Common myeloid progenitor, CD34-positive (primary cell): ENCODE measurements at regions of chr9 and their contacts with region 1.

Region 1: GRCh38 chr9:122125158-122125508 is 32.0 kb upstream of the TTLL11 start:
- DNase-seq: peak; percentile 74 to 86 (median 81)
- H3K4me3 ChIP-seq: no peak overlapping the region
- H3K27ac ChIP-seq: no peak overlapping the region
- H3K4me1 ChIP-seq: peaks cover 0 to 28% (median 16%) of the 10 kb centered on the region in 4 experiments
- H3K27me3 ChIP-seq: peaks cover 0 to 19% (median 6%) of the 10 kb centered on the region in 5 experiments

Region 2: GRCh38 chr9:122039234-122039633 is 85.9 kb before region 1 on chr9:
- CTCF ChIA-PET with region 1: no interaction called
- POLR2A ChIA-PET with region 1: no interaction called
- DNase-seq: no peak
- H3K4me3 ChIP-seq: no peak overlapping the region
- H3K27ac ChIP-seq: no peak overlapping the region
- H3K4me1 ChIP-seq: peaks cover 0 to 3% (median 0%) of the 10 kb centered on the region in 4 experiments
- H3K27me3 ChIP-seq: no peaks in the 10 kb centered on the region

Region 3: DNA sequence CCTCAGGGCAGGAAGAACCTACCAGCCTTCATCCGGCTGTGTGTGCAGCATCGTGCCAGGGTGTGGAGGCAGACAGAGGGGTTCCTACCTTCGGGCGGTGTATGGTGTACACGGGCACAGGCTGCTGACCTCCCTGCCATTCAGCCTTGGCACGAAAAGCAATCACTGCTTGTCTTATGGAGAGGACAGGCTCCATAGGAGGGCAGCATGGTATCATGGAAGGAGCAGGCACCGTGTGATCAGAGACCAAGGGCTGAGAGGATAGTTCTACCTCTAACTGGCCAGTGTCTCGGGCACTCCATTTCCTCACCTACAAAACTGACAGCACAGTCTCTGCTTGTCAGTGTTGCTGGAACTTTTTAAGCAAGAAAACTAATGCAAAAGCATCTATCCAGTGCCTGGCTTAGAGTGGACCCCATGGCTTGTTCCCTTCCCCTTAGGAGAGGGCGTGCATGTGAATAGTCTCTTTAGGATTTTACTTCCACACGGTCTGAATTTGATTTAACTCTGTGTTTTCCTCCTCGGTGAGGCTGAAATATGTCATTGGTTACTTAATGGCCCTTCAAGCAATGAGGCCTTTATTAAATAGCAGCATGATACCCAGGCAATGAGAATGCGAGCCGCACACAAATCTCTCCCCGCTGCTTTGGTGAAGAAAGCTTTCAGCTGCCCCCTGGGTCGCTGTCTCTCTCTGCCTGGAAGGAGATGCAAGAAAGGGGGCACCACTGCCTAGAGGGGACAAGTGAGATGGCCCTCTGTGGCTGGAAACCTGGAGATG is 54.2 kb before region 1 on chr9:
- CTCF ChIA-PET with region 1: no interaction called
- POLR2A ChIA-PET with region 1: no interaction called
- DNase-seq: no peak
- H3K4me3 ChIP-seq: no peak overlapping the region
- H3K27ac ChIP-seq: no peak overlapping the region
- H3K4me1 ChIP-seq: no peaks in the 10 kb centered on the region
- H3K27me3 ChIP-seq: no peaks in the 10 kb centered on the region

Region 4: DNA sequence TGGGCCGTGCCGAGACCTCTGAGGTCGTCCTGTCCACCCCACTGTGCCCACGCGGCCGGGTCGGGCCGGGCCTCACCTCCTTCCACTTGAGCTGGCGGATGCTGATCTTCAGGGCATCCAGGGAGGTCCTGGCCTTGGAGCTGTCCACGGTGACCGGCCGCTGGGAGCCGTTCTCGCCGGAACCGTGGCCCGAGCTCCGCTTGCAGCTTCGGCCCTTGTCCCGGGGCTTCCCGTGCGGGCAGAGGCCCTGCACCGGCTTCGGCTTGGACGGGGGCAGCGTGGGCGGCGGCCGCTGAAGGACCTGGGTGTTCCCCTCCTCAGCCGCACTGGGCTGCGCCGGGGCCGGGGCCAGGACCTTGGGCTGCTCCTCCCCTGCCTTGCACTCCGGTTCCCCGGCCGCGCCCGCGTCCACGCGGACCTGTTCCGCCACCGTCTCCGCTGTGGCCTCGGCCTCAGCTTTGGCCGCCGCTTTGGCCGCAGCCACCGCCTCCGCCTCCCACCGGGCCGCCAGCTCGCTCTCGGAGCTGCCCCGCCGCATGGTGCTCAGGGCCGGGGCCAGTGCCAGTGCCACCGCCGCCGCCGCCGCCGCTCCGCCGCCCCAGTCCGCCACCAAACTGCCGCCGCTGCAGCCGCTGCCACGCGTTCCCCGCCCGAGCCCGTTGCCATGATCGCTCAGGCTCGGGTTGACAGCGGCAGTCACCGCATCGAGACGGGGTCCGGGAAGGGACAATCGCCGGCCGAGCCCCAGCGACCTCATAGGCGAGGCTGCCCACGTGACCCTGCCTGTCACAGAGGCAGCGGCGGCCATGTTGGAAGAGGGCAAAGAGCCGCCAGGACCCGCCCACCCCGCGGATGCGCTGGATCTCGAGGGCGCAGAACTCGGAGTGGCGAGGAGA is 32.3 kb before region 1 on chr9 and contains the start of gene TTLL11:
- CTCF ChIA-PET with region 1: interaction called, 225 read pairs
- POLR2A ChIA-PET with region 1: no interaction called
- DNase-seq: peak; percentile 93 to 98 (median 97)
- H3K4me3 ChIP-seq: peak within 1 kb of the TSS; percentile 36 to 84 (median 73)
- H3K27ac ChIP-seq: no peak within 1 kb of the TSS
- H3K4me1 ChIP-seq: peaks cover 3 to 31% (median 22%) of the 10 kb centered on the region in 4 experiments
- H3K27me3 ChIP-seq: peaks cover 0 to 5% (median 0%) of the 10 kb centered on the region in 5 experiments

Region 5: GRCh38 chr9:122099271-122099869 is 25.8 kb before region 1 on chr9:
- CTCF ChIA-PET with region 1: interaction called, 225 read pairs
- POLR2A ChIA-PET with region 1: interaction called, 3 read pairs
- DNase-seq: peak; percentile 71 to 87 (median 81)
- H3K4me3 ChIP-seq: peak overlapping the region in 2 of 7 experiments; percentile 33 to 35
- H3K27ac ChIP-seq: no peak overlapping the region
- H3K4me1 ChIP-seq: peaks cover 0 to 9% (median 4%) of the 10 kb centered on the region in 4 experiments
- H3K27me3 ChIP-seq: peaks cover 0 to 5% (median 0%) of the 10 kb centered on the region in 5 experiments

Region 6: DNA sequence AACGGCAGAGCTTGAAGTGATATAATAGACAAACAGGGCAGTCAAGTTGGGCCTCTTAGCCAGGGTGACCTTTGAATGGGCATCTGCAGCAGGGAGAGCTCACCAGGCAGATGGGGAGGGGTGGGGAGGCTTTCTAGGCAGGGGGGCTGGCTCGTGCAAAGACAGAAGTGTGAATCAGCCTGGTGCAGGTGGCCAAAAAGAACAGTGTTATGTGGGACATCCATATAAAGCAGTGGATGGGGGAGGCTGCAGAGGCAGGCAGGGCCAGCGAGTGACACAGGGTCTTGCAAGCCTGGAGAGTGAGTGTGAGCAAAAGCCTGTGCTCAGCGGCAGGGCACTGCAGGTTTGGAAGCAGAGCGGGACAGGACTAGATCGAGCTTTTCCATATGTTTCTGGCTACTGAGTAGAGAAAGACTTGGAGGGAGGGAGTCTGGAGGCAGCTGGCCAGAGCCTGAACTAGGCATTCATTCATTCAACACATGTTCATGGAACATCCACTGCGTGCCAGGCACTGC is 17.8 kb before region 1 on chr9:
- CTCF ChIA-PET with region 1: interaction called, 75 read pairs
- POLR2A ChIA-PET with region 1: no interaction called
- DNase-seq: no peak
- H3K4me3 ChIP-seq: no peak overlapping the region
- H3K27ac ChIP-seq: no peak overlapping the region
- H3K4me1 ChIP-seq: no peaks in the 10 kb centered on the region
- H3K27me3 ChIP-seq: no peaks in the 10 kb centered on the region

Region 7: DNA sequence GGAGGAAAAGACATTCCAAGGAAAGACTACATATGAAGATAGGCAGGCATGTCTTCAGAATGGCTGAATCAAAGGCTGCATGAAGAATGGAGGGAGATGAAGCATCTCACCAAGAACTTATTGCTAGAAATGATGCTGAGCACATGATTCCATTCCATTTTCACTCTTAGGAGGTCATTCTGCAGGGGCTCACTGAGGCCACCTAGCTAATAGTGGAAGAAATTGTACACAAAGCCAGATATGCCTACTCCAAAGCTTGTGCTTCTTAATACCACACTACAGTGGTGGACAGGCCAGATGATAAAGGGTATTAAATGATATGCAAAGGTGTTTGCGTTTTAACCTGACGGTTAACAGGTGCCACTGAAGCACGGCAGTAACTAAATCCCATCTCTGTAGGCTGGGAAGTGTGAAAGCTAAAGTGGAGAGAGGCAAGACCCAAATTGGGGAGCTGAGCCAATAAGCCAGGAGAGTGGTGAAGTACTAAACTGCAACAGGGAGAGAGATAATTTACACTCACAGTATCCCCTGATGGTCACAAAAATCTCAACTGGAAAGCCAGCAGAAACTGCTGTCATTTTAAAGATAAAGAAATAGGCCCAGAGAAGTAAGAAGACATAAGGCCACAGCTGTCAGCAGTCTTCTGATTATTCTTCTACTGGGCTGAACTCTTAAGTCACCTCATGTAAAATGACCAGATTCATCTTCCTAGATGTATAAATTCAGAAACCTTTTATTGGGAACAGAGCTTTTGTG is 19.9 kb after region 1 on chr9:
- CTCF ChIA-PET with region 1: interaction called, 110 read pairs
- POLR2A ChIA-PET with region 1: no interaction called
- DNase-seq: peak in 2 of 3 donors; percentile 53 to 57
- H3K4me3 ChIP-seq: no peak overlapping the region
- H3K27ac ChIP-seq: no peak overlapping the region
- H3K4me1 ChIP-seq: peaks cover 0 to 17% (median 12%) of the 10 kb centered on the region in 4 experiments
- H3K27me3 ChIP-seq: no peaks in the 10 kb centered on the region

Region 8: GRCh38 chr9:122453677-122454135 is 328.6 kb after region 1 on chr9:
- CTCF ChIA-PET with region 1: interaction called, 19 read pairs
- POLR2A ChIA-PET with region 1: no interaction called
- DNase-seq: no peak
- H3K4me3 ChIP-seq: no peak overlapping the region
- H3K27ac ChIP-seq: no peak overlapping the region
- H3K4me1 ChIP-seq: no peaks in the 10 kb centered on the region
- H3K27me3 ChIP-seq: no peaks in the 10 kb centered on the region